K562 (cell line): ENCODE measurements at regions of chr2 and their contacts with region 1.

Region 1: GRCh38 chr2:176653479-176654443 is 384.5 kb downstream of the MTX2 start:
- DNase-seq: peak; percentile 29 to 58 (median 50)
- ATAC-seq: peak; percentile 95
- H3K4me3 ChIP-seq: no peak overlapping the region
- H3K27ac ChIP-seq: no peak overlapping the region
- H3K4me1 ChIP-seq: no peaks in the 10 kb centered on the region
- H3K27me3 ChIP-seq: no peaks in the 10 kb centered on the region; a peak in 2 of 5 replicates
- CTCF ChIP-seq: peak; percentile 64 to 77 (median 66)
- EP300 ChIP-seq: no peak
- POLR2A ChIP-seq: no peak
- RAD21 ChIP-seq: peak; percentile 26 to 42; a peak in 2 of 4 replicates

Region 2: DNA sequence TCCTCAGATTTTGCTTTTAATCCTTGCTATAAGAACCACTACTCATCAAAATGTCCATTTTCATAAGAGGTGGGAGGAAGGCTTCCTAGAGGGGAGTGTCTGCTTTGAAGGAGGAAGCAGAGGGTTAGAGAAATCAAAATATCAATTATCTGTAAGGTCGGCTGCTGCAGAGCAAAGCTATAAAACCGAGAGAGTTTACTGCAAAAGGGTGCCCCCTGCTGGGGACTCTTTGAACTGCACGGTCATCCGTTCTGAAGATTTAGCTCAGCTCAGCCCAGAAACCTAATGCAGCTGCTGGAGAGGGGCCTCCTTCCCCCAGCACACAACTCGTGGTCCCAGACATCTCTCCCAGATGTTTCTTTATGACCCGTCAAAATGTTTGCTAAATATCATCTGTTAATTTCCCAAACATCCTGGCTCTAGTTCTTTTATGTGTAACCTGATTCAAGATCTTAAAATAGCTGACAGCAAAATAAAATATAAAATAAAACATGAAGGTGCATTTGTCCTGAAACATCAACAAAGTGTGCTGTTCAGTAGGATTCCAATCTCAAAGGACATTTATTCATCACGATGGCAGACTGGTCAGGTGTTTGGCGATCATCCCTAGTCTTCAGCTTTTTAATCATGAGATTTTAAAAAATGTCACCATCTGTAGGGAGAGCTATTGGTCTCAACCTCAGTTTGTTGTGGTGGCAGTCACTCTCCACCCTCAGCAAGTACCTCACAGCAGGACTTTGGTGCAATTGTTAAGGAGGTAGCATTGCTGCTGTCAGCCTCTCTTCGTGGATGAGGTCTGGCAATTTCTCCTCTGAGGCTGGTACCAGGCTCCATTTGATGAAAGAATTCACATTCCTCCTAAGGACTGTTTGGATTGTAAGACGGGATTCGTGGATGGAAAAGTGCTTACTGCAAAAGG is 198.6 kb before region 1 on chr2:
- CTCF ChIA-PET with region 1: interaction called, 4 read pairs
- POLR2A ChIA-PET with region 1: no interaction called
- in situ Hi-C with region 1: no loop called
- intact Hi-C with region 1: loop called (anchors 5 kb)
- DNase-seq: peak; percentile 65 to 77 (median 75)
- ATAC-seq: peak; percentile 92
- H3K4me3 ChIP-seq: no peak overlapping the region
- H3K27ac ChIP-seq: no peak overlapping the region
- H3K4me1 ChIP-seq: no peaks in the 10 kb centered on the region
- H3K27me3 ChIP-seq: peaks cover 0 to 3% of the 10 kb centered on the region in 2 experiments; a peak in 2 of 5 replicates
- CTCF ChIP-seq: peak; percentile 83 to 90 (median 88)
- EP300 ChIP-seq: no peak
- POLR2A ChIP-seq: no peak
- RAD21 ChIP-seq: peak; percentile 75 to 84

Region 3: GRCh38 chr2:176665086-176665485 is 11.3 kb after region 1 on chr2:
- CTCF ChIA-PET with region 1: no interaction called
- POLR2A ChIA-PET with region 1: interaction called, 12 read pairs
- in situ Hi-C with region 1: no loop called
- intact Hi-C with region 1: no loop called
- DNase-seq: no peak
- ATAC-seq: no peak
- H3K4me3 ChIP-seq: no peak overlapping the region
- H3K27ac ChIP-seq: no peak overlapping the region
- H3K4me1 ChIP-seq: no peaks in the 10 kb centered on the region
- H3K27me3 ChIP-seq: peaks cover 0 to 2% of the 10 kb centered on the region in 2 experiments; a peak in 2 of 5 replicates
- CTCF ChIP-seq: no peak
- EP300 ChIP-seq: no peak
- POLR2A ChIP-seq: no peak
- RAD21 ChIP-seq: no peak

Region 4: DNA sequence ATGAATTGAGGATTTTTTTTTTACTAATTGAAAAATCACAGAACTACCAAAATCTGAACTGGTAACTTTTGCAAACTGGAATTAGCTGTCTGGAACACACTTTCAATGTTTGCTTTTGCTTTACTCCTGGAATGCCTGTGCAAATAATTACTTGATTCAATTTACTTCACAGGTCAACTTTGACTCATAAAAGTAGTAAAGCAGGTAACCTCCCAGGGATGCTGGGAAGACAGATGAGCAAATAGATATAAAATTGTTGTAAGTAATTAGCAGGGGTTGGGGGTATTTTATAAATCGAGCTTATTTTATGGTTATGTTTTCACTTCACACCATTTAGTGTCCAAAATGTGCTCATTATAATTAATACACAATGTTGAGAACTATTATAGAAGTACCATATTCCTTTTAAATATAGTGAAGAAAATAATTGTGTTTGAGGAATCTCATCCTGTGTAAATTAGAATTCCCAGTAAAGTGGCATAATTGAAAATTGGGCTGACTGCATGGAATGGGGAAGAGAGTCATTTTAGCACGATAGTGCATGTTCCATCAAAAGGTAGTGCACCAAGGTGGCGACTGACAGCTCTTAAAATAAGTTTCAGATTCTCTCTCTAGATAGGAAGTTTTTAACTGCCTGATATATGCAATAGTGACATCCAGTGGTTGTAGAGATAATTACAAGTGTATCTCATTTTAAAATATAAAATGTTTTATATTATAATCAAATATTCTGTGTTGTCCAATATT is 160.7 kb after region 1 on chr2:
- CTCF ChIA-PET with region 1: interaction called, 3 read pairs
- POLR2A ChIA-PET with region 1: no interaction called
- in situ Hi-C with region 1: no loop called
- intact Hi-C with region 1: loop called (anchors 10 kb)
- DNase-seq: peak; percentile 34 to 48 (median 44)
- ATAC-seq: peak; percentile 66; the same call in 2 of the 3 replicates
- H3K4me3 ChIP-seq: no peak overlapping the region
- H3K27ac ChIP-seq: no peak overlapping the region
- H3K4me1 ChIP-seq: no peaks in the 10 kb centered on the region
- H3K27me3 ChIP-seq: peaks cover under 1 to 11% of the 10 kb centered on the region in 2 experiments; a peak in 3 of 5 replicates
- CTCF ChIP-seq: peak; percentile 49 to 82 (median 62); a peak in 4 of 6 replicates
- EP300 ChIP-seq: no peak
- POLR2A ChIP-seq: no peak
- RAD21 ChIP-seq: peak; percentile 71 to 78

Region 5: GRCh38 chr2:176967911-176968450 is 314.2 kb after region 1 on chr2:
- CTCF ChIA-PET with region 1: no interaction called
- POLR2A ChIA-PET with region 1: no interaction called
- in situ Hi-C with region 1: no loop called
- intact Hi-C with region 1: no loop called
- DNase-seq: no peak
- ATAC-seq: no peak
- H3K4me3 ChIP-seq: no peak overlapping the region
- H3K27ac ChIP-seq: no peak overlapping the region
- H3K4me1 ChIP-seq: no peaks in the 10 kb centered on the region
- H3K27me3 ChIP-seq: no peaks in the 10 kb centered on the region
- CTCF ChIP-seq: no peak
- EP300 ChIP-seq: no peak
- POLR2A ChIP-seq: no peak
- RAD21 ChIP-seq: no peak